ENCODE measurements at regions of chr19 and their contacts with region 1.

Region 1: DNA sequence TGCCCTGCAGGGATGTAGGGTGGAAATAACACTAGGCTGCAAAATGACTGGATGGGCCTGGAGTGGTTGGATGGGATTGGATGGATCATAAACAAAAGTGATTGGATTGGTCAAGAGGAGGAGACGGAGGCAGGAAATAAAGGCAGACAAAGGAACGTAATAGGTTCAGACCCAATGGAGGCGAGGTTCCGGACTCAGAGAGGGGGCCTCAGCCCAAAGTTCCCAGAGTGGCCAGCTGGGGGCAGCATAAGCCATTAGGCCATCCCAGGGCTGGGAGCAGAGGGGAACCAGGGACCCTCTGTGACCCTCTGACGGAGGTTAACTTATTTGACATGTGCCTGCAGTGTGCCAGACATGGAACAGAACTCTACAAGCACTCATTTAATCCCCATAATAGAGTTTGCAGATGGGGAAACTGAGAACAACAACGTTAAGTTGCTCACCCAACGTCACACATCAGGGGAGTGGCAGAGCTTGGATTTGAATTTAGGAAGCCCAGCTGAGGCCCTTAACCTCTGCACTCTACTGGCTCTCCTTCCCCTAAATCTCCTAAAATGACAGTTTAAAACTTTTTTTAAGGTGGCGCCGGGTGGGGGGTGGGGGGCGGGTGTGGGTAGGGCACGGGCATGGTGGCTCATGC is 15.3 kb upstream of the MAP1S start:
- DNase-seq: no peak
- H3K4me3 ChIP-seq: no peak overlapping the region
- H3K27ac ChIP-seq: no peak overlapping the region
- H3K4me1 ChIP-seq: no peaks in the 10 kb centered on the region
- H3K27me3 ChIP-seq: peaks cover 0 to 25% (median 0%) of the 10 kb centered on the region in 3 donors
- CTCF ChIP-seq: peak; percentile 29 to 84 (median 66)
- EP300 ChIP-seq: no peak
- POLR2A ChIP-seq: no peak

Region 2: GRCh38 chr19:17766543-17767131 is 62.7 kb after region 1 on chr19:
- intact Hi-C with region 1: loop called (anchors 2 kb)
- DNase-seq: peak; percentile 81
- H3K4me3 ChIP-seq: peak overlapping the region in 1 of 4 donors; percentile 14
- H3K27ac ChIP-seq: no peak overlapping the region
- H3K4me1 ChIP-seq: peaks cover 0 to 10% (median 6%) of the 10 kb centered on the region in 4 donors
- H3K27me3 ChIP-seq: peaks cover 0 to 7% (median 0%) of the 10 kb centered on the region in 3 donors
- CTCF ChIP-seq: peak; percentile 37 to 76 (median 64)
- EP300 ChIP-seq: no peak
- POLR2A ChIP-seq: no peak

Region 3: DNA sequence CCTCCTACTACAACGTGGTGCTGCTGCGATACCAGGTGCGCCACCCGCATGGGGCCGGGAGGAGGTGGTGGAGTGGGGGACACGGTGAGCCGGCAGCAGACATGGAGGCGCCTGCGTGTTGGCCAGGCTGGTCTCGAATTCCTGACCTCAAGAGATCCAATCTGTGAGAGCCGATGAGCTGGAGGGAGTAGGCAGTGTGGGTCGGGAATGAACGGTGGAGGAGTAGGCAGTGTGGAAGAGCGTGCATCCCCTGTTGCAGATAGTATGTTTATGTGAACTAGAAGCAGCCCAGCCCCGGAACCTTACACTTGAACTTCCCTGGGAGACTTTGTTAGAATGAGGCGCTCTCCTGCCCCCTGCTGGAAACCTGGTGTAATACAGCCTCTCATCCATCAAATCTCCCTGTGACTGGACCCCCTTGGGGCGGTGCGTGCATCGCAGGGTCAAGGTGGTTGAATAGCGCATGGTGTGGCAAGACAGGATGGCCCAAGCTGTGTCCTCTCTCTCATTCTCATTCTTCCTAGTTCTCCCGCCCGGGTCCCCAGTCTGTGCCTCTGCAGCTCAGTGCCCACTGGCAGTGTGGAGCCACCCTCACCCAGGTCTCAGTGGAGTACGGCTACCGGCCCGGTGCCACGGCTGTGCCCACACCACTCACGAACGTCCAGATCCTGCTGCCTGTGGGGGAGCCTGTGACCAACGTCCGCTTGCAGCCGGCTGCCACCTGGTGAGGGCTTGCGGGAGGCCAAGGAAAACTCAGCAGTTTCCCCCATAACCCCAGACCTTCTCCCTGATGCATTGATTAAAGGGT is 80.5 kb after region 1 on chr19:
- intact Hi-C with region 1: loop called (anchors 5 kb)
- DNase-seq: peak; percentile 75
- H3K4me3 ChIP-seq: no peak overlapping the region
- H3K27ac ChIP-seq: no peak overlapping the region
- H3K4me1 ChIP-seq: peaks cover 0 to 7% (median 0%) of the 10 kb centered on the region in 4 donors
- H3K27me3 ChIP-seq: peaks cover 0 to 40% (median 11%) of the 10 kb centered on the region in 3 donors
- CTCF ChIP-seq: peak; percentile 21 to 67 (median 57)
- EP300 ChIP-seq: no peak
- POLR2A ChIP-seq: no peak